HCT116 (cell line): ENCODE measurements at regions of chr20 and their contacts with region 1.

Region 1: DNA sequence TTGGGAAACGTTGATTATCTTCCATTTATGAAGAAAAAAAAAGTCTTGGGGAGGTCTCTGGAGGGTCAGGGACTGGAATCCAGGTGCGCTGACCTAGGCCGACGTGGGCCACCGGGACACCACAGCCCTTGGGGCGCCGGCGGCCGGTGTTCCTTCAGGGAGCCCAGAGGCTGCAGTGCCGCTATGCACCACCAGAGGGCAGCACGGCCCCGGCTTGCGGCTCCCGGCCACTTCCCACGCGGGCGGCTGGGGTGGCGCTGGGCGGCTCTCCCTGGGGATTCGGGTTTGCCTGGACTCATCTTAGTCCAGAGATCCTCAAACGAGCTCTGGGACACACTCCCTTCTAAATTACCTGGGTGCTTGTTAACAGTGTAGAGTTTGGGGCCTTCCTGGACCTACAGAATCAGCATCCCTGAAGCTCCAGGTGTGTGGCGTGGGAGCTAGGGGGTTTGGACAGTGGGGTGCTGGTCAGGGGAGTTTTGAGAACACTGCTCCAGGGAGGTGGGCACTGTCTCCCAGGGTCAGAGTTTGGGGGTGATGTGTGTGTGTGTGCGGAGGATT is 23.0 kb upstream of the GTSF1L start:
- DNase-seq: peak; percentile 29
- ATAC-seq: peak; percentile 96
- H3K4me3 ChIP-seq: no peak overlapping the region; a peak in 1 of 4 replicates
- H3K27ac ChIP-seq: no peak overlapping the region
- H3K4me1 ChIP-seq: peaks cover 2 to 39% of the 10 kb centered on the region in 2 experiments; a peak in 3 of 4 replicates
- H3K27me3 ChIP-seq: no peaks in the 10 kb centered on the region
- CTCF ChIP-seq: peak; percentile 96 to 99 (median 98)
- POLR2A ChIP-seq: no peak
- RAD21 ChIP-seq: peak; percentile 99

Region 2: GRCh38 chr20:43448748-43449535 is 300.9 kb before region 1 on chr20:
- CTCF ChIA-PET with region 1: no interaction called
- POLR2A ChIA-PET with region 1: no interaction called
- RAD21 ChIA-PET with region 1: no interaction called
- intact Hi-C with region 1: loop called (anchors 1 kb)
- DNase-seq: peak; percentile 36
- ATAC-seq: peak; percentile 71
- H3K4me3 ChIP-seq: no peak overlapping the region
- H3K27ac ChIP-seq: no peak overlapping the region
- H3K4me1 ChIP-seq: peaks cover 0 to 10% of the 10 kb centered on the region in 2 experiments; a peak in 2 of 4 replicates
- H3K27me3 ChIP-seq: no peaks in the 10 kb centered on the region
- CTCF ChIP-seq: peak; percentile 68 to 86 (median 75); a peak in 5 of 6 replicates
- POLR2A ChIP-seq: no peak
- RAD21 ChIP-seq: peak; percentile 93

Region 3: GRCh38 chr20:43739148-43739749 is 10.6 kb before region 1 on chr20:
- CTCF ChIA-PET with region 1: no interaction called
- POLR2A ChIA-PET with region 1: no interaction called
- RAD21 ChIA-PET with region 1: no interaction called
- intact Hi-C with region 1: no loop called
- DNase-seq: no peak
- ATAC-seq: no peak
- H3K4me3 ChIP-seq: no peak overlapping the region
- H3K27ac ChIP-seq: no peak overlapping the region
- H3K4me1 ChIP-seq: peaks cover 0 to 3% of the 10 kb centered on the region in 2 experiments; a peak in 1 of 4 replicates
- H3K27me3 ChIP-seq: no peaks in the 10 kb centered on the region
- CTCF ChIP-seq: no peak
- POLR2A ChIP-seq: no peak
- RAD21 ChIP-seq: no peak

Region 4: GRCh38 chr20:43767686-43768474 is 18.1 kb after region 1 on chr20:
- CTCF ChIA-PET with region 1: no interaction called
- POLR2A ChIA-PET with region 1: no interaction called
- RAD21 ChIA-PET with region 1: no interaction called
- intact Hi-C with region 1: no loop called
- DNase-seq: no peak
- ATAC-seq: peak; percentile 52
- H3K4me3 ChIP-seq: no peak overlapping the region
- H3K27ac ChIP-seq: no peak overlapping the region
- H3K4me1 ChIP-seq: 0 out of 4 replicates have a peak, but pooled peaks cover 0 to 6% of the 10 kb centered on the region in 2 experiments
- H3K27me3 ChIP-seq: no peaks in the 10 kb centered on the region
- CTCF ChIP-seq: no peak
- POLR2A ChIP-seq: no peak
- RAD21 ChIP-seq: no peak

Region 5: DNA sequence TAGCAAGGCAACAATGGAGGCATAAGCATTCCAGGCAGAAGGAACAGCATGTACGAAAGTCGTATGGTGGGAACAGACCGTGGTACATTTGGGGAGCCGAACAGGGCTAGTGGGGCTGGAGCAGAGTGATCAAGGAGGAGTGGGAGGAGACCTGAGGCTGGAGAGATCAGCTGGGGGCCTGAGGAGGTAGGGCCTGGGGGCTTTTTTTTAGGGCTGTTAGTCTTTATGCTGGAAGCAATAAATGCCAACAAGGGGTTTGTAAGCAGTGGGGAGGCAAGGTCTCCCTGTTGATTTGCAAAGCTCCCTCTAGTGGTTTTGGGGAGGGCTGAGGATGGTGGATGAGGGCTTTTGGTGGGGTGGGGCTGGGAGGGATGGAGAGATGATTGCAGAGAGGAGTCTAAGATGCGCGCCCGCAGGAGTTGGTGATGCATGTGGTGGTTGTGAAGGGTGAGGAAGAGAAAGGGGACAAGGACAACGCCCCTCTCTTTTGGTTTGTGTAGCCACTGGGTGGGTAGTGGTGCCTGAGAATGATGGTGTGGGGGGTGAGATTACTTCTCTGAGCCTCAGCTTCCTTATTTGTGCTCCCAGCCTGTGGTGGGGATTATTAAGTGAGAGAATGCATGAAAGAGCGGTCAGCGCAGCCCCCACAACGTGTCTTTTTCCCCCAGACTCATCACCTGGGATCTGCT is 90.7 kb after region 1 on chr20:
- CTCF ChIA-PET with region 1: no interaction called
- POLR2A ChIA-PET with region 1: no interaction called
- RAD21 ChIA-PET with region 1: no interaction called
- intact Hi-C with region 1: loop called (anchors 1 kb)
- DNase-seq: peak; percentile 12
- ATAC-seq: peak; percentile 80
- H3K4me3 ChIP-seq: no peak overlapping the region
- H3K27ac ChIP-seq: no peak overlapping the region
- H3K4me1 ChIP-seq: peaks cover 3 to 24% of the 10 kb centered on the region in 2 experiments; a peak in 3 of 4 replicates
- H3K27me3 ChIP-seq: no peaks in the 10 kb centered on the region
- CTCF ChIP-seq: peak; percentile 48 to 74 (median 65); a peak in 5 of 6 replicates
- POLR2A ChIP-seq: no peak
- RAD21 ChIP-seq: peak; percentile 45

Region 6: GRCh38 chr20:43914311-43915210 is 164.7 kb after region 1 on chr20 and contains the start of gene TOX2:
- CTCF ChIA-PET with region 1: interaction called, 7 read pairs
- POLR2A ChIA-PET with region 1: no interaction called
- RAD21 ChIA-PET with region 1: interaction called in 1 of 2 experiments, 7 read pairs
- intact Hi-C with region 1: loop called (anchors 1 kb)
- DNase-seq: no peak
- ATAC-seq: peak; percentile 87
- H3K4me3 ChIP-seq: peak within 1 kb of the TSS; percentile 69 to 81
- H3K27ac ChIP-seq: peak within 1 kb of the TSS; percentile 34; the same call in 1 of the 2 replicates
- H3K4me1 ChIP-seq: peaks cover 7 to 40% of the 10 kb centered on the region in 2 experiments; a peak in 3 of 4 replicates
- H3K27me3 ChIP-seq: no peaks in the 10 kb centered on the region
- CTCF ChIP-seq: no peak
- POLR2A ChIP-seq: no peak
- RAD21 ChIP-seq: no peak
- total RNA-seq, gene TOX2: 39.6 TPM

Region 7: GRCh38 chr20:43949741-43950618 is 200.2 kb after region 1 on chr20:
- CTCF ChIA-PET with region 1: no interaction called
- POLR2A ChIA-PET with region 1: no interaction called
- RAD21 ChIA-PET with region 1: no interaction called
- intact Hi-C with region 1: no loop called
- DNase-seq: no peak
- ATAC-seq: no peak
- H3K4me3 ChIP-seq: no peak overlapping the region
- H3K27ac ChIP-seq: no peak overlapping the region
- H3K4me1 ChIP-seq: peaks cover 42 to 59% of the 10 kb centered on the region in 2 experiments
- H3K27me3 ChIP-seq: no peaks in the 10 kb centered on the region
- CTCF ChIP-seq: no peak
- POLR2A ChIP-seq: no peak
- RAD21 ChIP-seq: no peak